ENCODE measurements at regions of chrX and their contacts with region 1.

Region 1: GRCh38 chrX:49915361-49916222 is 6.8 kb upstream of the CLCN5 start:
- DNase-seq: peak; percentile 46 to 65 (median 51)
- H3K4me3 ChIP-seq: no peak overlapping the region
- H3K27ac ChIP-seq: no peak overlapping the region
- H3K4me1 ChIP-seq: peaks cover 0 to 10% of the 10 kb centered on the region in 2 donors
- H3K27me3 ChIP-seq: peaks cover 8% of the 10 kb centered on the region
- CTCF ChIP-seq: peak; percentile 58 to 87 (median 71)
- POLR2A ChIP-seq: no peak

Region 2: GRCh38 chrX:49704691-49705404 is 210.7 kb before region 1 on chrX:
- intact Hi-C with region 1: no loop called
- DNase-seq: no peak
- H3K4me3 ChIP-seq: no peak overlapping the region
- H3K27ac ChIP-seq: no peak overlapping the region
- H3K4me1 ChIP-seq: no peaks in the 10 kb centered on the region
- H3K27me3 ChIP-seq: peaks cover 26% of the 10 kb centered on the region
- CTCF ChIP-seq: no peak
- POLR2A ChIP-seq: no peak

Region 3: GRCh38 chrX:49960061-49960460 is 44.5 kb after region 1 on chrX:
- intact Hi-C with region 1: no loop called
- DNase-seq: no peak
- H3K4me3 ChIP-seq: no peak overlapping the region
- H3K27ac ChIP-seq: no peak overlapping the region
- H3K4me1 ChIP-seq: peaks cover 0 to 3% of the 10 kb centered on the region in 2 donors
- H3K27me3 ChIP-seq: peaks cover 7% of the 10 kb centered on the region
- CTCF ChIP-seq: no peak
- POLR2A ChIP-seq: no peak

Region 4: DNA sequence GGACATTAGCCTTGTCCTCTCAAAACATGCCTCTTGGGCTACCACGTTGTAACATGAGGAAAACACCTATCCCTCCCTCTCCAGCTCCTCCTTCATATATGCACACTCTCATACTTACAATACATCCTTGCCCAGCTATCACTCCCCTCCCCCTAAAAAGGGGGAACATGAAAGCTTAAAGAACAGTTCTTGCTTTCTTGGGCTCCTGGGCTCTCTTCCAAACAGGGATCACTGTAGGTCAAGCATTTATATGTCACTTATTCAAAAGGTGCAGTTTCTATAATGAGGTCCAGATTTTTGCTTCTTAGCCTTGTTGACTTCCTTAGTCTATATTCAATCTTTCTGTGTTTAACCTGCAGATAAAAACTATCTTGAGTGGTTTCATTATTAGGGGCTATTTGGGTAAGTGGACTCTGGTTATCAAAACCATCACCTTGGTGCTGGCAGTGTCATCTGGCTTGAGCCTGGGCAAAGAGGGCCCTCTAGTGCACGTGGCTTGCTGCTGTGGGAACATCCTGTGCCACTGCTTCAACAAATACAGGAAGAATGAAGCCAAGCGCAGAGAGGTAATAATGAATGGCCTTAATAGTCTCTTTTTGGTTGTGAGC is 165.8 kb after region 1 on chrX:
- intact Hi-C with region 1: loop called (anchors 5 to 10 kb)
- DNase-seq: peak; percentile 20 to 72 (median 33)
- H3K4me3 ChIP-seq: no peak overlapping the region
- H3K27ac ChIP-seq: no peak overlapping the region
- H3K4me1 ChIP-seq: no peaks in the 10 kb centered on the region
- H3K27me3 ChIP-seq: peaks cover 4% of the 10 kb centered on the region
- CTCF ChIP-seq: peak in 4 of 6 experiments; percentile 24 to 37 (median 28)
- POLR2A ChIP-seq: no peak

Measured in adrenal gland (tissue), 19 donors.